T-cell (primary cell): ENCODE measurements at regions of chr14 and their contacts with region 1.

Region 1: GRCh38 chr14:98742001-98742400 is 530.0 kb downstream of the BCL11B start:
- DNase-seq: no peak
- ATAC-seq: no peak
- H3K4me3 ChIP-seq: no peak overlapping the region
- H3K4me3 Mint-ChIP-seq: no peak overlapping the region
- H3K27ac ChIP-seq: no peak overlapping the region
- H3K27ac Mint-ChIP-seq: no peak overlapping the region
- H3K4me1 ChIP-seq: no peaks in the 10 kb centered on the region
- H3K4me1 Mint-ChIP-seq: peaks cover 6 to 18% (median 6%) of the 10 kb centered on the region in 3 donors
- H3K27me3 ChIP-seq: peaks cover 0 to 5% of the 10 kb centered on the region in 2 experiments
- H3K27me3 Mint-ChIP-seq: peaks cover 0 to 4% of the 10 kb centered on the region in 2 donors

Region 2: DNA sequence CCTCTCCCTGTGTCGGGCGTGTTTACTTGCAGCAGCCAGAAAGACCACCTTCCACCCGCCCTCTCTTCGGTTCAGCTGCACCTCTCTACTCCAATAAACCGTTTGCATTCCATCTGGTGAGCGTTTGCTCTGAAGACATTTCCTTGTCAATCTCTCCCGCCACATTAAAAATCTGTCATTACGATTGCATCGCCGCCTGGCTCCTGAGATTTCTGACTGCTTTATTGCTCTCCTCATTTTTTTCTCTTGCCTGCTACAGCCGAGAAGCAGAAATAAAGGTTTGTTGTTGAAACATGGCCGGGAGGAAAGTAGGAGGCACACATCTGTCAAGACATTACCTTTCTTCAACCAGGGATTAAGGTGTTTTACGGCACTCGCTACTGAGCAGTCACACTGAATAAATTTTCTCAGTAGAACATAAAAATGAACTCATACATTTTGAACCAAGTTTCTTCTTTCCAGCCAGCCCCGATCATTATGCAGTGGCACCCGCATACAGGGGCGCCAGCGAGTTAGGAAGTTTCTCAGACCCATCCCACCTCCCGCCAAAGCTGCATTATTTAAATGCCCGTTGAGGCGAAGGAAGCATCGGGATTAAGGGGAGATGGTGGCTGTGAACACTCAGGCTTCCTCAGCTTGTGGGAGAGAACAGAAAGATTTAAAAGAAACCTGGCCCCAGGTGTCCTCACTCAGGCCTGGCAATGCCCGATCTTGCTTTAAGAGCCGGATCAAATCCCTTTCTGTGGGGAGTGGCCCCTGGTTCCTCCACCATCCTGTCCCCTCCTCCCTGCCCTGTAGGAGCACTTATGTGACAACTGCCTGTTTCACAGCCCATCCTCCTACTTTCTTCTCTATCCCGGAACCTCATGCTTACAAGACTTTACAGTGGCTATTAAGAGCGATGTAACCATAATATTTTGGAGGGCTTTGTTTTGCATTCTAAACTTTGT is 578.9 kb before region 1 on chr14:
- CTCF ChIA-PET with region 1: no interaction called
- POLR2A ChIA-PET with region 1: interaction called in 1 of 2 experiments, 12 read pairs
- DNase-seq: no peak
- ATAC-seq: no peak
- H3K4me3 ChIP-seq: peak overlapping the region in 1 of 2 donors; percentile 36
- H3K4me3 Mint-ChIP-seq: peak overlapping the region in 2 of 3 donors; percentile 54 to 80
- H3K27ac ChIP-seq: no peak overlapping the region
- H3K27ac Mint-ChIP-seq: peak overlapping the region; percentile 75 to 99
- H3K4me1 ChIP-seq: peaks cover 36 to 53% of the 10 kb centered on the region in 2 experiments
- H3K4me1 Mint-ChIP-seq: peaks cover 69 to 88% (median 79%) of the 10 kb centered on the region in 3 donors
- H3K27me3 ChIP-seq: no peaks in the 10 kb centered on the region
- H3K27me3 Mint-ChIP-seq: no peaks in the 10 kb centered on the region

Region 3: DNA sequence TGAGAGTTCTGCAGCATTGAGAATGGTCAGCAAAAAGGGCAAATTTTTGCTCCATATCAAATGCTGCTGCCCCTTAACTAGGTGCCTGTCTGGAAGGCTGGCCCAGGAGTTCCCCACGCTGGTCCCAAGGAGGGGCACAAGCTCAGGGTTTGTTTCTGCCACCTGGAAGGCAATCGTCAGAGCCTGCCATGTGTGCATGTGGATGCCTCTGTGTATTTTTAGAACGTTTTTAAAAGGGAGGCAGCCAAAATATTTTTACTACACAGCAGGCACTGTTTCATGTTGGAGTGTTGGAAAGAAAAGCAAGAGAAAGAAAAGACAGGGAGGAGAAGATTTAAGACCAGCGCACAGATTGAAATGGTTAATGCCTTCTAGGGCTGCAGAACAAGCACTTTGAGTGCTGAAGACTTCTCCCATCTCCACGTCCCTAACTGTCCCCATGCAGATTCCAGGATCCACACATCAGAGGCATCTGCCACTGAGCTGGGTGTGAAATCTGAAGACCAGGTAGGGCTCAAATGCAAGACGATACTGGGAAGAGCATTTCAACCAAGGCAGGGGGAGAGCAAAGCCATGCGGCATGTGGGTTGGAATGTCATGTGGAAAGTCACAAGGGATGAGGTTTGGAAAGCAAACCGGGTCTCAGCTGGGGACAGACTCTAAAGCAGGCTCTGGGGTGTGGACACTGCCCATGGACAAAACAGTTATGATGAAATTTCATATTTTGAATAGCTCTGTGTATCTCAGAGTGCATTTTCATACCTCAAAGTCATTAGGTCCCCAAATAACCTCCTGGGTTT is 27.2 kb before region 1 on chr14:
- CTCF ChIA-PET with region 1: no interaction called
- POLR2A ChIA-PET with region 1: no interaction called
- DNase-seq: no peak
- ATAC-seq: no peak
- H3K4me3 ChIP-seq: no peak overlapping the region
- H3K4me3 Mint-ChIP-seq: no peak overlapping the region
- H3K27ac ChIP-seq: no peak overlapping the region
- H3K27ac Mint-ChIP-seq: no peak overlapping the region
- H3K4me1 ChIP-seq: peaks cover 2 to 4% of the 10 kb centered on the region in 2 experiments
- H3K4me1 Mint-ChIP-seq: peaks cover 14 to 45% (median 16%) of the 10 kb centered on the region in 3 donors
- H3K27me3 ChIP-seq: peaks cover 0 to 12% of the 10 kb centered on the region in 2 experiments
- H3K27me3 Mint-ChIP-seq: peaks cover 0 to 2% of the 10 kb centered on the region in 2 donors

Region 4: GRCh38 chr14:98754343-98755020 is 12.5 kb after region 1 on chr14:
- CTCF ChIA-PET with region 1: no interaction called
- POLR2A ChIA-PET with region 1: interaction called in 1 of 2 experiments, 12 read pairs
- DNase-seq: no peak
- ATAC-seq: no peak
- H3K4me3 ChIP-seq: no peak overlapping the region
- H3K4me3 Mint-ChIP-seq: no peak overlapping the region
- H3K27ac ChIP-seq: no peak overlapping the region
- H3K27ac Mint-ChIP-seq: no peak overlapping the region
- H3K4me1 ChIP-seq: no peaks in the 10 kb centered on the region
- H3K4me1 Mint-ChIP-seq: peaks cover 0 to 2% (median 0%) of the 10 kb centered on the region in 3 donors
- H3K27me3 ChIP-seq: no peaks in the 10 kb centered on the region
- H3K27me3 Mint-ChIP-seq: peaks cover 0 to under 1% of the 10 kb centered on the region in 2 donors